ENCODE measurements at regions of chr6 and their contacts with region 1.

Region 1: GRCh38 chr6:3281631-3282475 is 23.1 kb downstream of the PSMG4 start:
- DNase-seq: peak; percentile 40
- ATAC-seq: no peak

Region 2: GRCh38 chr6:3147914-3148757 is 133.7 kb before region 1 on chr6:
- intact Hi-C with region 1: no loop called
- DNase-seq: no peak
- ATAC-seq: no peak

Region 3: GRCh38 chr6:3456755-3457466 is 175.1 kb after region 1 on chr6 and contains the start of gene SLC22A23:
- intact Hi-C with region 1: loop called (anchors 5 kb)
- DNase-seq: peak; percentile 73
- ATAC-seq: peak; percentile 92
- total RNA-seq, gene SLC22A23: 5.4 TPM

Region 4: DNA sequence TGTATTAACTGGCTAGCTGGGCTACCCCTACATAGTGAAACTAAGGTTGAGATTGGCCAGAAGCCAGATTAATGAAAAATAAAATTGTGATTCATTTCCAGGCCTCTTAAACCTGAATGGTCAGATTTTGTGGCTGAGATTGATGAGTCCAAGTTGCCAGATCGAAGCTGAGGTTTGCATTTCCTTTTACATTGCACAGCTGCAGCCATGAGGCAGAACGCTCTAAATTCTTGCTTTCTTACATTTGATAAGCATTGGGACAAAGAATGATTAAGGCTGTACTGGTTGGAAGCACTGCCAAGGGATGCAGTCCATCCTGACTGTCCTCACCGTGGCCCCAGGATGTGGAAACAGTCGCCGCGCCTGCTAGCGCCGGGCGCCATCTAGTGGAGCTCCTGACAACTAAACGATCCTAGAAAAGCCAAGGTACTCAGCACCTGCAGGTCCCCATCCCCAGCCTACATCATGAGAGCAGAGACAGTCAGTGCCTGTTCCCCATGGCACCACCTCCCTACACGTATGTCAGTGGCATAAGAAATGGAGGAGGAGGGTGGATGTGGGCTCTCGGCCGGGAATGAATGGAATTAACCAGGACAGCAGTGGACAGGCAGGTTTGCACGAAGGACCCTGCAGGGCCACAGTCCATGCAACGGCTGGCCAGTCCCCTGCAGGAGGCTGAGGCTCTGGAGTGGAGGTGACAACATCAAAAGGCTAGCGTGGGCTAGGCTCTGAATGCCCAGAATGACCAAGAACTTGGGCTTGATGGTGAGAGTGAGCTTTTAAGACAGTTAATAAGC is 450.7 kb after region 1 on chr6:
- intact Hi-C with region 1: loop called (anchors 2 kb)
- DNase-seq: peak; percentile 78
- ATAC-seq: peak; percentile 83

Measured in Right ventricle myocardium superior (tissue), 1 donor.